Activated CD8-positive, alpha-beta memory T cell treated with anti-CD3 and anti-CD28 coated beads, Interleukin-2, amount 10 ng/mL, durations not matched to agents 7 days and 5 days (primary cell): ENCODE measurements at regions of chr7 and their contacts with region 1.

Region 1: DNA sequence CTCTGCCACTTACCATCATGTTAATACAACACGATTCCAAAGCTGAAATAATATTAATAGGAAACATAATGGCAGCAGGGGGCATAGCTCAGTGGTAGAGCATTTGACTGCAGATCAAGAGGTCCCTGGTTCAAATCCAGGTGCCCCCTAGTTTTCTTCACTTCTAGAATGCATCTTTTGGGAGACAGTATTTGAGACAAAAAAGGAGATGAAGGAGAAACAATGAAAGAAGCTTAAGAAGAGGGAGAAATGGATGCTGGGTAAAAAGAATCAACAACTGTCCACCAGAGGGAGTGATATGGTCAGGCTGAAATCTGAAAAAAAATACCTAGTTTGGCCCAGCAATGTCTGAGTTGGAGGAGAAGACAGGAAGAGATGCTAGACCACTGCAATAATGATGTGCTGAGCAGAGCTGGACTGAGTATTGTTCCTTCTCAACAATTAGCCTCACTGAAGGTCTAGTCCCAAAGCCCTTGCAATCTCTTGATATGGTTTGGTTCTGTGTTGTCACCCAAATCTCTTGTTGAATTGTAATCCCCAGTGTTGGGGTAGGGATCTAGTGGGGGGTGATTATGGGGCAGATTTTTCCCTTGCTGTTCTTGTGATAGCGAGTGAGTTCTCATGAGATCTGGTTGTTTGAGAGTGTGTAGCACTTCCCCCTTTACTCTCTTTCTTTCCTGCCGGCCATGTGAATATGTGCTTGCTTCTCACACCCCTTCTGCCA is 48.3 kb downstream of the ZNF783 start:
- DNase-seq: no peak
- ATAC-seq: peak; percentile 42
- H3K4me3 Mint-ChIP-seq: no peak overlapping the region
- H3K27ac Mint-ChIP-seq: no peak overlapping the region
- H3K4me1 Mint-ChIP-seq: no peaks in the 10 kb centered on the region
- H3K27me3 Mint-ChIP-seq: peaks cover 3% of the 10 kb centered on the region

Region 2: DNA sequence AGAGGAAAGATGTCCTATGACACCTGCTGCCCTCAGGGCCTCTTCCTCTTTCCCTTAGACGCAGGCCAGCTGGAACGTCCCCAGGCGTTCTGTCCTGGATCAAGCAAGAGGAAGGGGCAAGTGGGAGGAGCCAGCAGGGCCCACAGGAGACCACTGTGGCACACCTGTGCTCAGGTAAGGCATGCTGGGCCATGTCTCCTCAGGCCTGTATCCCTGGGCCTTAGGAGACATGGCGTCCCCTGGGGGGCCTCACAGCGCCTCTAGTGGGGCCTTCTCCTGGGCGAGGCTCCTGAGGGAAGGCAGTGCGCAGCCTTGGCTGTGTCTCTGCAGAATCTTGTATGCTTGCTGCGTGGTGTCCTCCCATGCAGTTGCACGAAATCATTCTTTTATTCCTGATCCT is 17.0 kb before region 1 on chr7:
- CTCF ChIA-PET with region 1: no interaction called
- DNase-seq: peak; percentile 31
- ATAC-seq: no peak
- H3K4me3 Mint-ChIP-seq: no peak overlapping the region
- H3K27ac Mint-ChIP-seq: no peak overlapping the region
- H3K4me1 Mint-ChIP-seq: peaks cover 19% of the 10 kb centered on the region
- H3K27me3 Mint-ChIP-seq: no peaks in the 10 kb centered on the region

Region 3: GRCh38 chr7:149321978-149322541 is 11.8 kb after region 1 on chr7:
- CTCF ChIA-PET with region 1: interaction called, 14 read pairs
- DNase-seq: no peak
- ATAC-seq: peak; percentile 53
- H3K4me3 Mint-ChIP-seq: peak overlapping the region; percentile 53
- H3K27ac Mint-ChIP-seq: peak overlapping the region; percentile 78
- H3K4me1 Mint-ChIP-seq: peaks cover 23% of the 10 kb centered on the region
- H3K27me3 Mint-ChIP-seq: peaks cover 9% of the 10 kb centered on the region

Region 4: GRCh38 chr7:149509774-149510173 is 199.5 kb after region 1 on chr7:
- CTCF ChIA-PET with region 1: no interaction called
- DNase-seq: no peak
- ATAC-seq: no peak
- H3K4me3 Mint-ChIP-seq: no peak overlapping the region
- H3K27ac Mint-ChIP-seq: no peak overlapping the region
- H3K4me1 Mint-ChIP-seq: no peaks in the 10 kb centered on the region
- H3K27me3 Mint-ChIP-seq: peaks cover 11% of the 10 kb centered on the region